ENCODE measurements at regions of chr1 and their contacts with region 1.

Region 1: GRCh38 chr1:246893191-246893939 is 38.4 kb downstream of the AHCTF1 start:
- DNase-seq: no peak
- H3K4me3 Mint-ChIP-seq: no peak overlapping the region
- H3K27ac Mint-ChIP-seq: peak overlapping the region; percentile 80
- H3K4me1 Mint-ChIP-seq: peaks cover 7% of the 10 kb centered on the region
- H3K27me3 Mint-ChIP-seq: no peaks in the 10 kb centered on the region

Region 2: DNA sequence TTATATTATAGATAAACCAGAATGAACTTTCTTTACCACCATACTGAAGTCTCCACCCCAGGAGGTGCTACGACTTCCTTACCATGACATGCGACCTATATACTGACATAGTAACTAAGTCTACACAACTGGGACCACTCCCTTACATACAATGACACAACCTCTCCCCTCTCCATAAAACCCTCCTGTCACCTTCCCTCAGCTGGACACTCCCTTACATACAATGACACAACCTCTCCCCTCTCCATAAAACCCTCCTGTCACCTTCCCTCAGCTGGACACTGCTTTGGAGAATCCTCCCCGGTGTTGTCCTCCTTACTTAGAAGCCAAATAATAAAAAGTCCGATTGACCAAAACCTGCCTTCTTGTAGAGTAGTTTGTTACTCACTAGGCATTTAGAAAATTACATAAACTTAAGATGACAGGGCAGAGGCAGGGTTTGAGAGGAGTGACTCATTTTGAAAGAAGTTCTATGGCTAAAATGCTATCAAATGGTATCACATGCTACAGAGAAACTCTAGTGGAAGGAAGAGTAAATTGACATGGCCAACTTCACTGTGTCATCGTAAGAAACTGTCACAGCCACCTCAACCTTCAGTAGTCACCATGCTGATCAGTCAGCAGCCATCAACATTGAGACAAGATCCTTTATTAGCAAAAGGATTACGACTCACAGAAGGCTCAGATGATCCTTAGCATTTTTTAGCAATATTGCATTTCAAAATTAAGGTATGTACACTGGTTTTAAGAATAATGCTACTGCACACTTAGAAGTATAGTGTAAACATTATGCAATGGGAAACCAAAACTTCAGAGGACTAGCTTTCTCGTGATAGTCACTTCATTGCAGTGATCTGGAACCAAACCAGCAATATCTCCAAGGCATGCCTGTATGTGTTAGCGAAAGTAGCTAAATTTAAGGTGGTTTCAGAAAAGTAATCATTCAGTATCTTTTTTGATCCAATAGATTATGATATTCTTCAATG is 18.0 kb before region 1 on chr1:
- intact Hi-C with region 1: loop called (anchors 2 kb)
- DNase-seq: no peak
- H3K4me3 Mint-ChIP-seq: no peak overlapping the region
- H3K27ac Mint-ChIP-seq: peak overlapping the region; percentile 72
- H3K4me1 Mint-ChIP-seq: peaks cover 16% of the 10 kb centered on the region
- H3K27me3 Mint-ChIP-seq: no peaks in the 10 kb centered on the region

Region 3: DNA sequence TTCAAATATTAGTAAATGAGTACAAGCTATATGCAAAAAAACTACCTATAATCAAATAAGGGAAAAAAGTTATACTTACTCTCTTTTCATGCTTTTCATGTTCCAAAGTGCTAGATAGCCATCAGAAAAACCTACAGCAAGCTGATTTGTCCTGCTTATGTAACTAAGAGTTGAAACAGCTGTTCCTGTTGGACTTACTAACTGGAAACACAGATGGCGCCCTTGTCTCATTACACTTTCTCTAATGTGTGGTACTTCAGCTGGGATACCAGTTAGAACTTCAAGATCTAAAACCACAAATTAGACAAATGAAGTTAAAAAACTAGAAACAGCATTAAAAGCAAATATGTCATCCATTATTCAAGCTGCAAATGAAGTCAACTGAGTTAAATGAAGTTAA is 14.1 kb after region 1 on chr1:
- intact Hi-C with region 1: loop called (anchors 1 kb)
- DNase-seq: peak; percentile 74
- H3K4me3 Mint-ChIP-seq: no peak overlapping the region
- H3K27ac Mint-ChIP-seq: no peak overlapping the region
- H3K4me1 Mint-ChIP-seq: peaks cover 2% of the 10 kb centered on the region
- H3K27me3 Mint-ChIP-seq: no peaks in the 10 kb centered on the region